ENCODE measurements at regions of chr7 and their contacts with region 1.

Region 1: DNA sequence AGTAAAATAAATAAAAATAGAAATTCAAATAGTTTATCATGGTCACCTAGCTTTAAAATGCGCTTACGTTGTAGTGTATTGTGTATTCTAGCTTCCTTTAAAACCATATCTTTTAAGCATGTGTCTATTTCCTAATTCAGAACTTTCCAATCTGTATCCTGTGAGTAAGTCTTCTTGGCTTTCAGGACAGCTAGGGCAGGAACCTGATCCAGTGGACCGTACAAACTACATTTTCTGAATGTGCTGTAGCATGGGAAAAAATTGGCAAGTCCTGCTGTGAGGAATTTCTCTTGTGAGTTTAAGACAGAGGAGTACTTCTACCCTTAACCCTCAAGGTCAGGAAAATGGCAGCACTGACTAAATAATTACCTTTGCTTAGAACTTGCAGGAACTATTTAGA is 12.1 kb downstream of the OPN1SW start:
- DNase-seq: no peak
- H3K4me3 ChIP-seq: no peak overlapping the region
- H3K27ac ChIP-seq: no peak overlapping the region
- H3K4me1 ChIP-seq: no peaks in the 10 kb centered on the region
- H3K27me3 ChIP-seq: no peaks in the 10 kb centered on the region
- CTCF ChIP-seq: no peak
- POLR2A ChIP-seq: no peak

Region 2: GRCh38 chr7:128883622-128884501 is 120.3 kb after region 1 on chr7:
- intact Hi-C with region 1: loop called (anchors 10 kb)
- DNase-seq: peak; percentile 91
- H3K4me3 ChIP-seq: no peak overlapping the region
- H3K27ac ChIP-seq: no peak overlapping the region
- H3K4me1 ChIP-seq: no peaks in the 10 kb centered on the region
- H3K27me3 ChIP-seq: no peaks in the 10 kb centered on the region
- CTCF ChIP-seq: peak; percentile 94 to 97 (median 95)
- POLR2A ChIP-seq: no peak

Measured in testis (tissue), 5 donors.